Prostate gland (tissue), 2 donors: ENCODE measurements at regions of chr1 and their contacts with region 1.

Region 1: DNA sequence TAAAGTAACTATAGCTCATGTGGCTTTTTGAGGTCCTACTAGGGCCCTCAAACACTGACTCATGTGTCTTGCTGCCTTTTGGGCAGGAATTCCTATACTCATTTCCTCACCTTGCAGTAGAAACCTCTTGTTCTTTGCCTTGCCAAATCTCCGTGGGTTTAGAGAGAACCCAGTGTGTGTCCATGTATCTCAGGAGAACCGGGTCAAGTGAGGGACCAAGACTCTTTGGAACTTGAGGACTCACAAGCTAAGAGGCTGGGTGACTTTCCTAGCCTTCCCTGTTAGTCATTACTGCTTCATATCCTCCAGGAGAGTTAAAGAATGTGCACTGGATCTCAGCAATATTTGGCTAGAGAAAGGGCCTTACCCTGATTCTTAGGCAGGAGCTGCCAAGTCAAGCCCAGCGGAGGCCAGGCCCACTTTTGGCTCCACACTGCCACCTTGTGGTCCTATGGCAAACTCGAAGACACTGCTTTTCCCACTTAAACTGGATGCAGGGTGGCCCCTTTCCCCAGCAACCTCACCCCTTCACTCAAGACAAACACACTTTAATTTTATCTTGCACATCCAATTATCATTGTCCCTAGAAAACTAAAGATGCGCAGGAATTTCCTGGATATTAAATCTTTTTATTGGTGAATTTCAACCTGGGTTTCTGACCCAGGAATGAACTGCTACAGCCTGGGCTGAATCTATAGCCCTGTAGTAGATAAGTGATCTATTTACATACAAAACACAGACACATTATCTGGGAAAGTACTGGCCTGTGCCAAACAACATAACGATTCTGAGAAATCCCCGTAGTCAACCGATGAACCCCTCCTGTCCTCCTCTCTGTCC is 10.6 kb downstream of the AVPR1B start:
- DNase-seq: peak; percentile 81
- H3K4me3 ChIP-seq: no peak overlapping the region
- H3K27ac ChIP-seq: no peak overlapping the region
- H3K4me1 ChIP-seq: no peaks in the 10 kb centered on the region
- H3K27me3 ChIP-seq: no peaks in the 10 kb centered on the region
- CTCF ChIP-seq: peak; percentile 62 to 95 (median 88)
- POLR2A ChIP-seq: no peak

Region 2: GRCh38 chr1:205791568-205792180 is 314.9 kb before region 1 on chr1:
- intact Hi-C with region 1: loop called (anchors 10 kb)
- DNase-seq: peak; percentile 61
- H3K4me3 ChIP-seq: no peak overlapping the region
- H3K27ac ChIP-seq: no peak overlapping the region
- H3K4me1 ChIP-seq: no peaks in the 10 kb centered on the region
- H3K27me3 ChIP-seq: no peaks in the 10 kb centered on the region
- CTCF ChIP-seq: peak; percentile 31 to 81 (median 66)
- POLR2A ChIP-seq: no peak

Region 3: DNA sequence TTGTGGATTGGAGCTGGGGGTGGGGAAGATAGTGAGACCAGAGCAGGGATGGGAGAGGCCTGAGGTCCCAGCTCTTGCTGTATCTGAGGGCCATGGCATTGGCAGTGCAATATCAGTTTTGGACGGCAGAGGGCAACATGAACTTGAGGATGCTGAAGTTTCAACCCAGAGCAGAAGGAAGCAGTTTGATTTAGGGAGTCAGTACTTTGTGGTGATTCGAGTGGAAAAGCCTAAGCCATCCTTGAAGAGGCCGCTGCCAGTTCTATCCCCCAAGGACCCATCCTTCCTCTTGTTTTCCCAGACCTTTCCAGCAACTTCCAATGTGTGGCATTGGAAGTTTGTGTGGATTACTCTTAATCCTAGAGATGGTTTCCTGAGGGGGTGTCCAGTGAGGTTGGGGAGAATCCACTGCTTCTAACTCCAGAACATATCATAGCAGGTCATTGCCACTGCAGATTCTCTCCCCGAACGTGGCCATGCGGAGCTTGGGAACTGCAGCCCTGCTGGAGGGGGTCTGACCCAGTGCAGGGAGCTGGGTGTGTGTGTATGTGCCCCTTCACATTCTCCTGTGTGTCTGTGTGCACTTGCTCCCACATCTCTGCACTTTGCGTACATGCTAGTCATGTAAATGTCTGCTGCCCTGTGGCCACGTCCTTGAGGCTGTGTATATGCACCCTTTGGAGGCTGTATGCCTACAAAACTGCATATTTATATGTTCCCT is 187.4 kb before region 1 on chr1:
- intact Hi-C with region 1: loop called (anchors 5 kb)
- DNase-seq: peak; percentile 84
- H3K4me3 ChIP-seq: no peak overlapping the region
- H3K27ac ChIP-seq: no peak overlapping the region
- H3K4me1 ChIP-seq: no peaks in the 10 kb centered on the region
- H3K27me3 ChIP-seq: no peaks in the 10 kb centered on the region
- CTCF ChIP-seq: peak; percentile 68 to 95 (median 88)
- POLR2A ChIP-seq: no peak

Region 4: GRCh38 chr1:205983925-205984725 is 122.4 kb before region 1 on chr1:
- intact Hi-C with region 1: loop called (anchors 2 kb)
- DNase-seq: peak; percentile 91
- H3K4me3 ChIP-seq: no peak overlapping the region
- H3K27ac ChIP-seq: peak overlapping the region; percentile 4 to 37
- H3K4me1 ChIP-seq: no peaks in the 10 kb centered on the region
- H3K27me3 ChIP-seq: no peaks in the 10 kb centered on the region
- CTCF ChIP-seq: peak in 3 of 4 experiments; percentile 38 to 78 (median 65)
- POLR2A ChIP-seq: no peak

Region 5: GRCh38 chr1:206030714-206031113 is 75.8 kb before region 1 on chr1:
- intact Hi-C with region 1: loop called (anchors 2 kb)
- DNase-seq: peak; percentile 81
- H3K4me3 ChIP-seq: no peak overlapping the region
- H3K27ac ChIP-seq: no peak overlapping the region
- H3K4me1 ChIP-seq: no peaks in the 10 kb centered on the region
- H3K27me3 ChIP-seq: peaks cover 4% of the 10 kb centered on the region
- CTCF ChIP-seq: peak; percentile 16 to 85 (median 74)
- POLR2A ChIP-seq: no peak

Region 6: DNA sequence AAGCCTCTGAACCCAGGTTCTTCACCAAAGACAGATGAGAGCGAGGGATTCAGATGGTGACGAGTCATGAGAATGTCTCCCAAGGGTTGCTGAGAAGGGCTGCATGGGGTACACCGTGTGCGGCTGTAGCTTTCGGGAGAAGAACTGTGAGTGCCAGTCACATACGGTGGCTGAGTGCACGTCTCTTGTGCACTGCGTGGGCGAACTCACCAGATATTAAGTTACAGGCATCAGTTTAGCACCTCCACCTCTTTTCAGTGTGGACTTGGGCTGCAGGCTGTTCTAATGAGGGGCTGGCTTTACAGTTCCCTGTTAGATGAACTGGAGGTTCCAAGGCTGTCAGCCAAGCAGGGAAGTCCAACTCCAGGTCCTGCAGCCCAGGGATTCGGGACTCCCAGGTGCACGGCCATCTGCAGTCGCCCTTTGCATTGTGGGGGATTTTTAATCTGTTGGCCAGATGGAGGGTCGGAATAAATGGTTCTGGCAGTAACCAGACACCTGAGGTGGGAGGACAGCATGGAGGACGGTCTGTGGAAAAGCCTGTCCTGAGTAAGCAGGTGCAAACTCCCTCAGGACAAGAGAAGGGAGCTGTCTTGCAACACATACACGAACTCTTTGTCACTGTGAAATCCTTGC is 37.1 kb after region 1 on chr1:
- intact Hi-C with region 1: no loop called
- DNase-seq: no peak
- H3K4me3 ChIP-seq: no peak overlapping the region
- H3K27ac ChIP-seq: no peak overlapping the region
- H3K4me1 ChIP-seq: no peaks in the 10 kb centered on the region
- H3K27me3 ChIP-seq: no peaks in the 10 kb centered on the region
- CTCF ChIP-seq: no peak
- POLR2A ChIP-seq: no peak